Breast epithelium (tissue), 4 donors: ENCODE measurements at regions of chr3 and their contacts with region 1.

Region 1: GRCh38 chr3:52220380-52221026 is 4.9 kb downstream of the TLR9 start:
- DNase-seq: peak; percentile 75 to 91
- H3K4me3 ChIP-seq: no peak overlapping the region
- H3K27ac ChIP-seq: peak overlapping the region; percentile 52 to 57
- H3K4me1 ChIP-seq: peaks cover 8 to 26% of the 10 kb centered on the region in 2 donors
- H3K27me3 ChIP-seq: no peaks in the 10 kb centered on the region
- CTCF ChIP-seq: peak; percentile 80 to 87 (median 81)
- POLR2A ChIP-seq: no peak

Region 2: GRCh38 chr3:51963951-51964451 is 256.5 kb before region 1 on chr3:
- intact Hi-C with region 1: loop called (anchors 5 kb)
- DNase-seq: no peak
- H3K4me3 ChIP-seq: no peak overlapping the region
- H3K27ac ChIP-seq: peak overlapping the region in 1 of 2 donors; percentile 5
- H3K4me1 ChIP-seq: peaks cover 15% of the 10 kb centered on the region in 2 donors
- H3K27me3 ChIP-seq: no peaks in the 10 kb centered on the region
- CTCF ChIP-seq: no peak
- POLR2A ChIP-seq: no peak

Region 3: GRCh38 chr3:52268036-52268435 is 47.5 kb after region 1 on chr3:
- intact Hi-C with region 1: loop called (anchors 1 kb)
- DNase-seq: no peak
- H3K4me3 ChIP-seq: no peak overlapping the region
- H3K27ac ChIP-seq: peak overlapping the region; percentile 64 to 69
- H3K4me1 ChIP-seq: peaks cover 4 to 18% of the 10 kb centered on the region in 2 donors
- H3K27me3 ChIP-seq: no peaks in the 10 kb centered on the region
- CTCF ChIP-seq: no peak
- POLR2A ChIP-seq: no peak